Common myeloid progenitor, CD34-positive (primary cell): ENCODE measurements at regions of chr14 and their contacts with region 1.

Region 1: DNA sequence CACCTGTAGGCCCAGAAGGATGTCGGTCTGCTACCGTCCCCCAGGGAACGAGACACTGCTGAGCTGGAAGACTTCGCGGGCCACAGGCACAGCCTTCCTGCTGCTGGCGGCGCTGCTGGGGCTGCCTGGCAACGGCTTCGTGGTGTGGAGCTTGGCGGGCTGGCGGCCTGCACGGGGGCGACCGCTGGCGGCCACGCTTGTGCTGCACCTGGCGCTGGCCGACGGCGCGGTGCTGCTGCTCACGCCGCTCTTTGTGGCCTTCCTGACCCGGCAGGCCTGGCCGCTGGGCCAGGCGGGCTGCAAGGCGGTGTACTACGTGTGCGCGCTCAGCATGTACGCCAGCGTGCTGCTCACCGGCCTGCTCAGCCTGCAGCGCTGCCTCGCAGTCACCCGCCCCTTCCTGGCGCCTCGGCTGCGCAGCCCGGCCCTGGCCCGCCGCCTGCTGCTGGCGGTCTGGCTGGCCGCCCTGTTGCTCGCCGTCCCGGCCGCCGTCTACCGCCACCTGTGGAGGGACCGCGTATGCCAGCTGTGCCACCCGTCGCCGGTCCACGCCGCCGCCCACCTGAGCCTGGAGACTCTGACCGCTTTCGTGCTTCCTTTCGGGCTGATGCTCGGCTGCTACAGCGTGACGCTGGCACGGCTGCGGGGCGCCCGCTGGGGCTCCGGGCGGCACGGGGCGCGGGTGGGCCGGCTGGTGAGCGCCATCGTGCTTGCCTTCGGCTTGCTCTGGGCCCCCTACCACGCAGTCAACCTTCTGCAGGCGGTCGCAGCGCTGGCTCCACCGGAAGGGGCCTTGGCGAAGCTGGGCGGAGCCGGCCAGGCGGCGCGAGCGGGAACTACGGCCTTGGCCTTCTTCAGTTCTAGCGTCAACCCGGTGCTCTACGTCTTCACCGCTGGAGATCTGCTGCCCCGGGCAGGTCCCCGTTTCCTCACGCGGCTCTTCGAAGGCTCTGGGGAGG is at the start of gene LTB4R:
- DNase-seq: peak; percentile 85 to 94 (median 88)
- H3K4me3 ChIP-seq: peak within 1 kb of the TSS in 6 of 7 experiments; percentile 17 to 68 (median 42)
- H3K27ac ChIP-seq: peak within 1 kb of the TSS in 1 of 2 experiments; percentile 50
- H3K4me1 ChIP-seq: peaks cover 19 to 79% (median 69%) of the 10 kb centered on the region in 4 experiments
- H3K27me3 ChIP-seq: no peaks in the 10 kb centered on the region

Region 2: GRCh38 chr14:24188251-24189058 is 122.5 kb before region 1 on chr14 and contains the start of gene IPO4:
- CTCF ChIA-PET with region 1: interaction called, 10 read pairs
- POLR2A ChIA-PET with region 1: no interaction called
- DNase-seq: peak; percentile 98
- H3K4me3 ChIP-seq: peak within 1 kb of the TSS; percentile 65 to 90 (median 79)
- H3K27ac ChIP-seq: peak within 1 kb of the TSS; percentile 46 to 77
- H3K4me1 ChIP-seq: peaks cover 0 to 25% (median 20%) of the 10 kb centered on the region in 4 experiments
- H3K27me3 ChIP-seq: no peaks in the 10 kb centered on the region

Region 3: GRCh38 chr14:24241829-24242443 is 69.0 kb before region 1 on chr14:
- CTCF ChIA-PET with region 1: interaction called, 38 read pairs
- POLR2A ChIA-PET with region 1: no interaction called
- DNase-seq: peak; percentile 93 to 97 (median 97)
- H3K4me3 ChIP-seq: peak overlapping the region; percentile 41 to 94 (median 85)
- H3K27ac ChIP-seq: peak overlapping the region; percentile 96 to 99
- H3K4me1 ChIP-seq: peaks cover 12 to 41% (median 30%) of the 10 kb centered on the region in 4 experiments
- H3K27me3 ChIP-seq: no peaks in the 10 kb centered on the region

Region 4: GRCh38 chr14:24271134-24271833 is 39.6 kb before region 1 on chr14 and contains the start of gene RABGGTA:
- CTCF ChIA-PET with region 1: interaction called, 119 read pairs
- POLR2A ChIA-PET with region 1: interaction called, 3 read pairs
- DNase-seq: peak; percentile 93 to 96 (median 96)
- H3K4me3 ChIP-seq: peak within 1 kb of the TSS; percentile 74 to 96 (median 85)
- H3K27ac ChIP-seq: peak within 1 kb of the TSS; percentile 80 to 94
- H3K4me1 ChIP-seq: peaks cover 2 to 38% (median 18%) of the 10 kb centered on the region in 4 experiments
- H3K27me3 ChIP-seq: no peaks in the 10 kb centered on the region

Region 5: GRCh38 chr14:24289649-24290249 is 21.2 kb before region 1 on chr14:
- CTCF ChIA-PET with region 1: interaction called, 119 read pairs
- POLR2A ChIA-PET with region 1: no interaction called
- DNase-seq: peak in 2 of 3 donors; percentile 42 to 47
- H3K4me3 ChIP-seq: no peak overlapping the region
- H3K27ac ChIP-seq: no peak overlapping the region
- H3K4me1 ChIP-seq: no peaks in the 10 kb centered on the region
- H3K27me3 ChIP-seq: no peaks in the 10 kb centered on the region

Region 6: GRCh38 chr14:24431569-24432258 is 120.8 kb after region 1 on chr14:
- CTCF ChIA-PET with region 1: interaction called, 30 read pairs
- POLR2A ChIA-PET with region 1: no interaction called
- DNase-seq: peak; percentile 94 to 96 (median 95)
- H3K4me3 ChIP-seq: peak overlapping the region in 3 of 7 experiments; percentile 81 to 93 (median 89)
- H3K27ac ChIP-seq: no peak overlapping the region
- H3K4me1 ChIP-seq: peaks cover 12 to 68% (median 66%) of the 10 kb centered on the region in 4 experiments
- H3K27me3 ChIP-seq: no peaks in the 10 kb centered on the region